HEK293 (cell line): ENCODE measurements at regions of chr5 and their contacts with region 1.

Region 1: GRCh38 chr5:43389679-43390329 is 22.4 kb downstream of the CCL28 start:
- H3K4me3 ChIP-seq: no peak overlapping the region
- H3K27ac ChIP-seq: no peak overlapping the region
- H3K4me1 ChIP-seq: no peaks in the 10 kb centered on the region
- CTCF ChIP-seq: peak; percentile 86

Region 2: DNA sequence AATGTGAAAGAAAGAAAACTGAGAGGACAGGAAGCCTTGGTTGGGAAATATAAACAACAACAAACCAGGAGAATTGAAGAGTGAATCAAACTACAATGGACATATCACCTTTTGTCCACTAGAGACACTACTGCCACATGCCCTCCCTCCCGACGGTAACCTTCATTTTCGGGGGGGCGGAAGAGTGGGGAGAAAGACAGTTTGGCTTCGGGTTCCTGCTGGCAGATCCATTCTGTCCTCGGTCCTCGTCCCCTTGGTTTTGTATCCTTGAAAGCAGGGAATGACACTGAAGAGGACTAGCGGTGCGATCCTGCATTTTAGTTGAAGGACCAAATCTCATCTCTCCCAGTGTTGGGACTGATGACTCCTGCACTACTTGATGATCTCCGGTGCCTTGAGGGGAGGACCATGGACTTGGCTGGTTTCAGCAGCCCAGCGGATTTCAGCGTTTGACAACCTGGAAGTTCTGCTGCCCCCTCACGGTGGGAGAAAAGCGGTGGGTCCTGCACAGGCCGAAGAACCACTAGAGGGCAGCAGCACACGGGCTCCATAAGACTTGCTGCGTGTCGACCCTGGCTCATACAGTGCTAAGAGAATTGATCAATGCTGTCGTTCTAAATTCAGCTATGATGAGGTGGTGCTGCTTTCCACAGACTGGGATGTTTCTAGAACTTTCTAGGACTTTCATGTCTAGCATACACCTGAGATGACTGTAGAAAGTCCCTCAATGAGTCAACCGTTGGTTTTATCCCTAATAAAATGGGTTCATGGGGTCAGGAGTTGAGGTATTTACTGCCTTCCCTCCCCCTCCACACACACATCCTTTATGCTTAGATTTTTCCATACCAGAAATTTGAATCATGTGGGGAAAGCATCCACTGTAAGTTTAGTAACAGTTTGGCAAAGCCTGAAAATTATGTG is 284.2 kb before region 1 on chr5:
- CTCF ChIA-PET with region 1: interaction called, 63 read pairs
- POLR2A ChIA-PET with region 1: no interaction called
- H3K4me3 ChIP-seq: peak overlapping the region; percentile 44
- H3K27ac ChIP-seq: no peak overlapping the region
- H3K4me1 ChIP-seq: no peaks in the 10 kb centered on the region
- CTCF ChIP-seq: peak; percentile 100

Region 3: DNA sequence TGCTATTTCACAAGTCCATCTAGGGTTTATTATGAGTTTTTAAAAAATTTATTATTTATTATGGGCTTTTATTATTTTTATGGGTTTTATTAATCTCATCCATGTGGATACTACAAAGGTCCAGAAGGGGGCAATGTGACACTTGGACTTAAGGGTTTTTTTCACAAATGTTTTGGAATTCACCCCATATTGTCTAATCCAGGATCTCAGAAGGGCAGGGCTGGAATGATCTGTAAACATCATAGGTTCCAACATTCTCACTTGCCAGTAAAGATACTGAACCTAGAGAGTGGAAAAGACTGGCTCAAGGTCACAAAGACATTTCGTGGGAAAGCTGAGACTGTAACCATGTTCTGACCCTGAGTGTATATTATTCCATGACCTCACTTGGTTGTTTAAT is 162.1 kb before region 1 on chr5:
- CTCF ChIA-PET with region 1: interaction called, 36 read pairs
- POLR2A ChIA-PET with region 1: no interaction called
- H3K4me3 ChIP-seq: no peak overlapping the region
- H3K27ac ChIP-seq: no peak overlapping the region
- H3K4me1 ChIP-seq: no peaks in the 10 kb centered on the region
- CTCF ChIP-seq: no peak

Region 4: GRCh38 chr5:43305948-43306565 is 83.7 kb before region 1 on chr5:
- CTCF ChIA-PET with region 1: interaction called, 21 read pairs
- POLR2A ChIA-PET with region 1: no interaction called
- H3K4me3 ChIP-seq: no peak overlapping the region
- H3K27ac ChIP-seq: no peak overlapping the region
- H3K4me1 ChIP-seq: peaks cover 27% of the 10 kb centered on the region
- CTCF ChIP-seq: peak; percentile 56; the same call in 1 of the 2 replicates

Region 5: GRCh38 chr5:43401827-43402226 is 12.0 kb after region 1 on chr5:
- CTCF ChIA-PET with region 1: interaction called, 24 read pairs
- POLR2A ChIA-PET with region 1: no interaction called
- H3K4me3 ChIP-seq: no peak overlapping the region
- H3K27ac ChIP-seq: no peak overlapping the region
- H3K4me1 ChIP-seq: no peaks in the 10 kb centered on the region
- CTCF ChIP-seq: no peak; the same call in 1 of the 2 replicates